ENCODE measurements at regions of chr14 and their contacts with region 1.

Region 1: GRCh38 chr14:87992718-87993628 is at the start of gene GALC:
- DNase-seq: peak; percentile 98
- ATAC-seq: peak; percentile 93
- H3K4me3 Mint-ChIP-seq: peak within 1 kb of the TSS; percentile 91
- H3K27ac Mint-ChIP-seq: peak within 1 kb of the TSS; percentile 93
- H3K4me1 Mint-ChIP-seq: peaks cover 61% of the 10 kb centered on the region
- H3K27me3 Mint-ChIP-seq: no peaks in the 10 kb centered on the region
- total RNA-seq, gene GALC: 15.6 to 17.0 TPM

Region 2: DNA sequence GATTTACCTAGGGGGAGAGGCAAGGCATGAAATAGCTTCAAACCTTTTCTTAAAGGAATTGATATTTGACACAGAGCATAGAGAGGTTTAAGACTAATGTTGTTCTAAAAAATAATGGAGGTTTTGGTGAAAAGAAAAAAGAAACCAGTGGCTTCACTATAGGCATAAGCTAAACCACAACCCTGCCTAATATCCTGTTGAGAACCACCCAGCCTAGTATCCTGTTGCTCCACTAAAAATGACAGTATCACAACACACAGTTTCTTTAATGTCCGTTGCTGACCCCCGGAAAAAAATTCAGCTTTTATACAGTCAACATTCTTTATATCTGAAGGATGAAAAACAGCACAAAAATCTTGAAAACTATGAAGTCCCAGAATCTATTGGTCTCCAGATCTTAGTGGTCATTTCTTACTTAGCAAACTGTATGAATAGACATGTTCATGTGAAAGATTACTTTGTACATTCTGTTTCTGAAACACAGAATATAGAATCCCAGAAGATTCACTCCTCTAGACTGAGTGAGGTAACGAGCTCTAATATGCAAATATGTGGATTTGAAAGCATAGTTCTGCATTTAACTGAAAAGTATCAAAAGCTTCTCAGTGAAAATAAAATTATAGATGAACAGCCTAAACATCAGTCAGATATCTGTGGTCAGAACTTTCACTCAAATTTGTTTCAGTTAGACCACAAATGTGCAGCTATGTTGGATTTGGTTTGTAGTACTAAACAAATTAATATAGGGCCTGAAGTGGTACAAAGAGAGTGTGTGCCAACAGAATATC is 40.5 kb before region 1 on chr14:
- CTCF ChIA-PET with region 1: interaction called, 43 read pairs
- POLR2A ChIA-PET with region 1: interaction called, 25 read pairs
- DNase-seq: peak; percentile 45
- ATAC-seq: peak; percentile 88
- H3K4me3 Mint-ChIP-seq: peak overlapping the region; percentile 75
- H3K27ac Mint-ChIP-seq: peak overlapping the region; percentile 94
- H3K4me1 Mint-ChIP-seq: peaks cover 52% of the 10 kb centered on the region
- H3K27me3 Mint-ChIP-seq: no peaks in the 10 kb centered on the region

Region 3: GRCh38 chr14:88005978-88006851 is 13.2 kb after region 1 on chr14:
- CTCF ChIA-PET with region 1: interaction called, 24 read pairs
- POLR2A ChIA-PET with region 1: interaction called, 161 read pairs
- DNase-seq: peak; percentile 85
- ATAC-seq: peak; percentile 90
- H3K4me3 Mint-ChIP-seq: peak overlapping the region; percentile 91
- H3K27ac Mint-ChIP-seq: peak overlapping the region; percentile 96
- H3K4me1 Mint-ChIP-seq: peaks cover 63% of the 10 kb centered on the region
- H3K27me3 Mint-ChIP-seq: no peaks in the 10 kb centered on the region

Region 4: DNA sequence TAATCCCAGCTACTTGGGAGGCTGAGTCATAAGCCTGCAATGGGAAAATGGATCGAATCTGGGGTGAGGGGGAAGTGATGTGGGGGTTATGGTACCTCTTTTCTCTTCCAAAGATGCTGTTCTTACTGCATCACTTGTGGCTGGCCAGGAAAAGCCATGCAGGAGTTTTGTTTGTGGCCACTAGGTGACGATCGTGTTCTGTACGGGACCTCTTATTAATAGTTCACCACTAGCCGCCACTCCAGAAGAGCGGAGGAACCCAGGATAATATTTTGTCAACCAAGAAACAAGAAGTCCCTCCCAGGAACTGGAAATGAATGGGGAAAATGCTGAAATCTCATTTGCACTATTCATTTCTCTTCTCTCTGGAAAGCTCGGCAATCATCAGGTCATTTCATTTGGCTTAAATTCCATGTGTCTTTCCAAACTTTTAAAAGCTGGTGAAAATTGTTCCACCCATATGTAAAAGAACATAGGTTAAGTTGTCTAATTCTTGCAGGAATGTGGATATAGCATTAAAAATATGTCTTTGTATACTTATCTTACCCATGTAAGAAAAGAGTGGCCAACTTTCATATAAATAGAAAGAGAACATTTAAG is 20.9 kb after region 1 on chr14:
- CTCF ChIA-PET with region 1: interaction called, 16 read pairs
- POLR2A ChIA-PET with region 1: interaction called, 7 read pairs
- DNase-seq: peak; percentile 46
- ATAC-seq: no peak
- H3K4me3 Mint-ChIP-seq: no peak overlapping the region
- H3K27ac Mint-ChIP-seq: peak overlapping the region; percentile 4
- H3K4me1 Mint-ChIP-seq: peaks cover 63% of the 10 kb centered on the region
- H3K27me3 Mint-ChIP-seq: no peaks in the 10 kb centered on the region

Region 5: GRCh38 chr14:88272390-88273269 is 279.7 kb after region 1 on chr14:
- CTCF ChIA-PET with region 1: no interaction called
- POLR2A ChIA-PET with region 1: no interaction called
- DNase-seq: no peak
- ATAC-seq: no peak
- H3K4me3 Mint-ChIP-seq: no peak overlapping the region
- H3K27ac Mint-ChIP-seq: no peak overlapping the region
- H3K4me1 Mint-ChIP-seq: no peaks in the 10 kb centered on the region
- H3K27me3 Mint-ChIP-seq: peaks cover 6% of the 10 kb centered on the region

Region 6: GRCh38 chr14:88535149-88535548 is 542.2 kb after region 1 on chr14:
- CTCF ChIA-PET with region 1: no interaction called
- POLR2A ChIA-PET with region 1: no interaction called
- DNase-seq: no peak
- ATAC-seq: no peak
- H3K4me3 Mint-ChIP-seq: no peak overlapping the region
- H3K27ac Mint-ChIP-seq: no peak overlapping the region
- H3K4me1 Mint-ChIP-seq: no peaks in the 10 kb centered on the region
- H3K27me3 Mint-ChIP-seq: peaks cover 12% of the 10 kb centered on the region

Measured in activated CD8-positive, alpha-beta T cell treated with anti-CD3 and anti-CD28 coated beads, Interleukin-2, amount 10 ng/mL, durations not matched to agents 7 days and 5 days (primary cell).